ENCODE measurements at regions of chr15 and their contacts with region 1.

Region 1: DNA sequence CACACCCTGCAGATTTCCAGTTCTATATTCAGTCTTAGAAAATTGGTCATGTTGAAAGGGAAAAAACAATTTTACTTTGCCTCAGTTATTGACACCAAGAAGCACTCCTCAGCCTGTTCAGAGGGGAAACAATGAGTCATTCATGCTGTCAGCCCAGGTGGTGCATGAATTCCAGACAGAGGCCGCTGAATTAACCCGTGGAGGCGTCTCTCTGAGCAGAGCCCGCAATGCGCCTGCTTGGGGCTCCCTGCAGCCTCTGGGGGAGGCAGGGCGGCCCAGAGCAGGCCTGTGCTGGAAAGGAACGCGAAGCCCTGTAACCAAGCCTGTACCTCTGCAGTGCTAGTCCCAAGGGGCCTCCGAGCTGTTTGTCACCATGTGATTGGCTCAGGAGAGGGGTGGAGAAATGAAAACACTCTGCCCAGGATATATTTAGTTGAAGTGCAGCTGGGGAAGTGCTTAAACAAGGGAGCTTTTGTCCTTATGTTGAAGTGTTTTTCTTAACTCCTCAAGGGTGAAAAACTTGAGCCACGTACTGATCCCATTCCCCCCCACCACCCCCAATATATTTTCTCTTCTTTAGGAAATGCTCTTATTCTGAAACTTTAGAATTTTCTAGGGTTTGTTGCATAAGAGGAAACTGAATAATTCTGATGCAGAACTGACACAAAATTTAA is 68.3 kb upstream of the CHD2 start:
- DNase-seq: peak; percentile 83 to 97 (median 91)
- H3K4me3 ChIP-seq: peak overlapping the region in 1 of 4 donors; percentile 22
- H3K27ac ChIP-seq: peak overlapping the region; percentile 82 to 96 (median 92)
- H3K4me1 ChIP-seq: peaks cover 25 to 39% of the 10 kb centered on the region in 2 donors
- H3K27me3 ChIP-seq: no peaks in the 10 kb centered on the region
- CTCF ChIP-seq: no peak
- POLR2A ChIP-seq: peak; percentile 48 to 92

Region 2: DNA sequence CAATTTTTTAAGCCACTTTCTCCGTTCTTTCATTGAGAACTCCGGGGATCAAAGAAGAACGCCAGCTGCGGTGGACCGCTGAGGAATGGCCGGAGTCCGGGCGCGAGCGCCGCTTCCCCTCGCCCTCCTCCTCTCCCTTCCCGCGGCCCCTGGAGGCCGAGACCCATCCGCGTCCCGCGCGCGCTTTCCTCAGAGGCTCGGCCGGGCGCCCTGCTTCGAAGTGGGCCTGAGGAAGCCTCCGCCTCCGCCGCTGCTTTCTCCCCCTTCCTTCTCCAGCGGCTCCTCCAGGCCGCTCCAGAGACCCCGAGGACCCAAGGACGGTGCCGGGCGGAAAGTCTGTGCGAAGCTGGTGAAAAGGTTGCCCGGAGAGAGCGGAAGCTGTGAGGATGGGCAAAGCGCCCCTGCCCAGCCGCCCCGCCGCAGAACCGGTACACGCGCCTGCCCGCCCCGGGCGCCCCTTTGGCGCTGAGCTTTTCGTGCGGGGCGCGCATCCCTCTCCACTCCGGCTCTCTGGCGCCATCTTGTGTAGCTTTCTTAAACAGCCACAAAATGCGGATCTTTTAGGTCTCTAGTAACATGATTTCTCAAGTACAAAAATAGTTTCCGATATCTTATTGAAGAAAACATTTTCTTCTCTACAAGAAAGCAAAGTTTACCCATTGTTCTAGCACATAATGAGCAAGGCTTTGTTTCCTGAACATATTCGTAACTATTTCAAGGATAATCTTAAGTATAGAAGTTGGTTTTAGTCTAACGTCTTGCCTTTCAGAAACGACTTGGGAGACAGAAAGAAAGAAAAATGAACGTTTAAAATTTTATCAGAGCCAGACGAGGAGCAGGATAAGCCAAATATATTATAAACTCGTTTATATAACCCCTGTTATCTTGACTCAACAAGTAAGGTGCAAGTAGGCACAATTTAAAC is 117.1 kb before region 1 on chr15:
- intact Hi-C with region 1: no loop called
- DNase-seq: peak; percentile 63 to 88 (median 76)
- H3K4me3 ChIP-seq: peak overlapping the region in 2 of 4 donors; percentile 46 to 70
- H3K27ac ChIP-seq: peak overlapping the region in 4 of 5 donors; percentile 25 to 83 (median 52)
- H3K4me1 ChIP-seq: no peaks in the 10 kb centered on the region
- H3K27me3 ChIP-seq: no peaks in the 10 kb centered on the region
- CTCF ChIP-seq: peak; percentile 74 to 94 (median 80)
- POLR2A ChIP-seq: no peak

Region 3: DNA sequence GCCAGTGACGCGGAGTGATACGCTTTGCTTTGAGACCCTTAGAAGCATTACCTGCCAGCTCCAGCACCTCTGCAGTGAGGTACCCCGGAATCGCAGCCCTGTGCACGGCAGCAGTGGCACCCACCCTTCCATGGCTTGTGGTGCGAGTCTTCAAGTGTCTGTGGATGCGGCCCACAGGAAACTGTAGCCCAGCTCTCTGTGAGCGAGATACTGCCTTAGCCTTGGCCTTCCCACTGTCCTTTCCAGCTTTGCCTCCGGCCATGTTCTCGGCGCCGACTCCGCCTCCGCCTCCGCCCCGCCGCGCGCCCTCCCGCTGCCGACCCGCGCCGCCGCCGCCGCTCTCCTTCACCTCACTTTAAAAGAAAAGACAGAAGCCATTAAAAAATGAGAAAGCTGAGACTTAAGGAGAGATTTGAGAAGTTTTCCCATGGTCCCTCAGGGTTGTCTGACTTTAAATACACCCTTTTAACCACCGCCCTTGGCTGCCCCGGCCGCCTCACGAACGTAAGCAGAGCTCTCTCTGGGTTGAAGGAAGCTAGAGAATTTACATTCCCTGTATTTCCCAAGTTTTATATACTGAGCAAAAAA is 97.8 kb before region 1 on chr15:
- intact Hi-C with region 1: no loop called
- DNase-seq: peak in 5 of 7 donors; percentile 21 to 76 (median 28)
- H3K4me3 ChIP-seq: peak overlapping the region in 2 of 4 donors; percentile 13 to 61
- H3K27ac ChIP-seq: peak overlapping the region in 4 of 5 donors; percentile 7 to 82 (median 66)
- H3K4me1 ChIP-seq: peaks cover 0 to 5% of the 10 kb centered on the region in 2 donors
- H3K27me3 ChIP-seq: no peaks in the 10 kb centered on the region
- CTCF ChIP-seq: no peak
- POLR2A ChIP-seq: peak in 1 of 2 donors; percentile 7

Region 4: DNA sequence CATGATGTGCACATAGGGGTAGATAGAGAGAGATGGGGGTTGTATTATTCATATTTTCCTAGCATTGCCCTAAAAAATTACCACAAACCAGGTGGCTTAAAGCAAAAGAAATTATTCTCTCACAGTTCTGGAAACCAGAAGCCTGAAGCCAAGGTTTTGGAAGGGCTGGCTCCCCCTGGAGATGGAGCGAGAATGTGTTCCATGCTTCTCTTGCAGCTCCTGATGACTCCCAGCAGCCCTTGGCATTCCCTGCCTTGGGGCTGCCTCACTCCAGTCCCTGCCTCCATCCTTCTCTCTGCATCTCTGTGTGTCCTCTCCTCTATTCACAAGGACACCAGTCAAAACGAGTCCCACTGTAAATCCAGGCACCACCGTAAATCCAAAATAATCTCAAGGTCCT is 84.7 kb before region 1 on chr15:
- intact Hi-C with region 1: no loop called
- DNase-seq: no peak
- H3K4me3 ChIP-seq: no peak overlapping the region
- H3K27ac ChIP-seq: no peak overlapping the region
- H3K4me1 ChIP-seq: no peaks in the 10 kb centered on the region
- H3K27me3 ChIP-seq: no peaks in the 10 kb centered on the region
- CTCF ChIP-seq: no peak
- POLR2A ChIP-seq: no peak

Region 5: GRCh38 chr15:92881802-92882696 is 50.3 kb after region 1 on chr15:
- intact Hi-C with region 1: loop called (anchors 5 to 10 kb)
- DNase-seq: peak; percentile 98 to 100 (median 99)
- H3K4me3 ChIP-seq: peak overlapping the region in 1 of 4 donors; percentile 99
- H3K27ac ChIP-seq: peak overlapping the region; percentile 74 to 100 (median 91)
- H3K4me1 ChIP-seq: peaks cover 28 to 42% of the 10 kb centered on the region in 2 donors
- H3K27me3 ChIP-seq: no peaks in the 10 kb centered on the region
- CTCF ChIP-seq: no peak
- POLR2A ChIP-seq: peak; percentile 84 to 93

Region 6: DNA sequence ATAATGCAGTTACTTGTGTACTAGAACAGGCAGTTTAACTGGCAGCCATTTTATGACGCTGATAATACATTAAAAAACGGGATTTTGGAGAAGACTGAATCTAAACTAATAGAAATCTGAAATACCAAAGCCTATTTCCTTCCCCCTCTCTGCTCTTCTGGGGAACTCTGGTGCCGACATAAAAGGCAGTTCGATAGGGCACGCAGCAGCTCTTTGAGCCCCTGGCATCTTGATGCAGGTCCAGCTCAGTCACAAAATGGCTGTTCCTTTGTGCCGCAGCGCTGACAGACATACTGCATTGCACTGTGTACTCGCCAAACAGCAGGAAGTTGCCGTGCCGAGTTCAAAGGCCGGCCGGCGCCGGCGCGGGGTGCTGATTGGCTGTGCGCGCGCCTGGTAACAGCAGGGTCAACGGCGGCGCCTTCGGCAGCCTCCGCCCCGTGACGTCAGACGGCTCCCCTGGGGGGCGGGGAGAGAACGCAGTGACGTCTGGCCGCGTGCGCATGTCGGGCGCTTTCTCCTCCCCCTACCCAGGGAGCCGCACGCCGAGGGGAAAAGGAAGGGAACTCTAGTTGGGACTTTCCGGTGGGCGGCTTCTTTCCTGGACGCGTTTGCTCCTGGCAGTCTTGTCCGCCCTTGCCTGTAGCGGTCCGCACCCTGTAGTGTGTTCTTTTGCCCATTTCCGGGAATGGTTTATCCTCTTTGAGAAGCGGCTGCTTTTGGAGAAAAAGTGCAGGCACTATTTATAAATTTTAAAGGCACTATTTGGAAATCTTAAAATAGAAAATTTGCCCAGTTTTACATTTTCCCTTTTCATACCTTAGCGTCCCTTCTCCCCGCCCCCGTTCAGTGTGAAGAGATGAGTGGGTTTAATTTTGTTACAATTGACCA is 72.4 kb after region 1 on chr15:
- intact Hi-C with region 1: no loop called
- DNase-seq: peak; percentile 98 to 100 (median 99)
- H3K4me3 ChIP-seq: peak overlapping the region in 2 of 4 donors; percentile 58 to 75
- H3K27ac ChIP-seq: peak overlapping the region; percentile 94 to 99 (median 94)
- H3K4me1 ChIP-seq: peaks cover 33 to 61% of the 10 kb centered on the region in 2 donors
- H3K27me3 ChIP-seq: no peaks in the 10 kb centered on the region
- CTCF ChIP-seq: peak in 1 of 6 experiments; percentile 24
- POLR2A ChIP-seq: peak; percentile 80 to 98